Tibial artery (tissue), 4 donors: ENCODE measurements at regions of chr9 and their contacts with region 1.

Region 1: DNA sequence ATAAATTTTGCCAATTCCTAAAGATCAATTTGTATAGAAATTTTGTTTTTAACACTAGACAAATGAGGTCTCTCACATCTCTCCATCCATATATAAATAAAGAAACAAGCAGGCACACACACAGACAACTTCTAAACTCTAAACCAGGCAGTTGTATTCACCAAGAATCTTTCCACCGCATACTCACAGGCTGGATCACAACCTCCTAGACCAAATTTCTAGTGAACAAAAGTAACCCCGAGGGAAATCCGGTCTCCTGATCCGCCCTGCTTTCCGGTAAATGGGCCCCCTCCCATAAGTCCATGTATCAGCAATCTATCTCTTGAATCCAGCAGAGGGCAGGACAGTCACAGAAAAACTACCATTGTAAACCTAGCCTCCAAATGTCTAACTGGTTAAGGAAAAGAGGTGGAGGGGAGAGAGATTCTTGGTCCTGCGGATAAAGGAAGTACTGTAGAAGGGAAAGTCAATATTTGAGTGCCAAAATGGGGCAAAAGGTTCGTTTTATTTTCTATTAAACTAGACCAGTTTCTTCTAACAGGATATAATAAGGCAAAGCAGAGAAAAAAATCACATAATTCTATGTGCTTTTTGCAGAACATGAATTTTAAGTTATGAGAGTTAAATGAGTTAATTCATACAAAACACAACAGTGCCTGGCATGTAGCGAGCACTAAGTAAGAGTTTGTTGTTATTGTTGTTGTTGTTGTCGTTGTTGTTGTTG is 4.8 kb upstream of the SMU1 start:
- DNase-seq: peak in 1 of 2 donors; percentile 69
- H3K4me3 ChIP-seq: no peak overlapping the region
- H3K27ac ChIP-seq: peak overlapping the region; percentile 47 to 52
- H3K4me1 ChIP-seq: peaks cover 0 to 35% (median 24%) of the 10 kb centered on the region in 4 donors
- H3K27me3 ChIP-seq: no peaks in the 10 kb centered on the region
- CTCF ChIP-seq: peak; percentile 63 to 91

Region 2: DNA sequence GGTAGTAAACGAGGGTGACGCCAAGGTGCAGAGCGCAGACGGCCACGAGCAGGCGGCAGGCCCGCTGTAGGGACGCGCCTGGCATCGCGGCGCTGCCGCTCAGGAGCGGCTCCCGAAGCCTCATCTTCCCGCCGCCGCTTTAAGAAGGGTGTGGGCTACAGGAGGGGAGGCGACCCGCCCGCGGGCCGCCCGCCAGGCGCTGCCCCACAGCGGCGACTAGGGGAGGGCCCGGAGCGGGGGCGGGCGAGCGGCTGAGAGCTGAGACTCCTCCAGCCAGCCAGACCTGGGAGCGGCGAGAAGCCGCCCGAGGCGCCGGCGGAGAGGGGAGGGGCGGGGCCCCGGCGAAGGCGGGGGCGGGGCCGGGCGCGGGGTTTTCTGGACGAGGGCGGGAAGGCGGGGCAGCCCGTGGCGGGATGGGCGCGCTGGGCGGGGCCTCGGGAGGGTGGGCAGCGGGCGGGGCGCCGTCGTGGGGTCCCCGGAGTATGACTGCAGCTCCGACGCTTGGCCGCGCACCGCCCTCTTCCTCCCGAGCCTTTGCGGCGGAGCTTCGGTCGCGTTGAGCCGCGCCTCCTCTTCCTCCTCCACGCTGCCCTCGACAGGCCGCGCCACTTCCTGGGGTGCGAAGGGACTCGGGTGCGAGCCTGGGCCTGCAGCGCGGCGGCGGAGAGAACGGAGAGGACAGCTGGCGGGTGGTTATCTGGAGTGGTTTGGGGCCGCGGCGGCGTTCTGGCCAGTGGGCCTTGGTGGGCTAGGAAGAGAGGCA is 85.9 kb after region 1 on chr9 and contains the start of gene B4GALT1:
- intact Hi-C with region 1: loop called (anchors 5 kb)
- DNase-seq: peak; percentile 94 to 98
- H3K4me3 ChIP-seq: peak within 1 kb of the TSS; percentile 92
- H3K27ac ChIP-seq: peak within 1 kb of the TSS; percentile 95 to 98
- H3K4me1 ChIP-seq: peaks cover 0 to 43% (median 30%) of the 10 kb centered on the region in 4 donors
- H3K27me3 ChIP-seq: no peaks in the 10 kb centered on the region
- CTCF ChIP-seq: peak in 1 of 2 experiments; percentile 27

Region 3: DNA sequence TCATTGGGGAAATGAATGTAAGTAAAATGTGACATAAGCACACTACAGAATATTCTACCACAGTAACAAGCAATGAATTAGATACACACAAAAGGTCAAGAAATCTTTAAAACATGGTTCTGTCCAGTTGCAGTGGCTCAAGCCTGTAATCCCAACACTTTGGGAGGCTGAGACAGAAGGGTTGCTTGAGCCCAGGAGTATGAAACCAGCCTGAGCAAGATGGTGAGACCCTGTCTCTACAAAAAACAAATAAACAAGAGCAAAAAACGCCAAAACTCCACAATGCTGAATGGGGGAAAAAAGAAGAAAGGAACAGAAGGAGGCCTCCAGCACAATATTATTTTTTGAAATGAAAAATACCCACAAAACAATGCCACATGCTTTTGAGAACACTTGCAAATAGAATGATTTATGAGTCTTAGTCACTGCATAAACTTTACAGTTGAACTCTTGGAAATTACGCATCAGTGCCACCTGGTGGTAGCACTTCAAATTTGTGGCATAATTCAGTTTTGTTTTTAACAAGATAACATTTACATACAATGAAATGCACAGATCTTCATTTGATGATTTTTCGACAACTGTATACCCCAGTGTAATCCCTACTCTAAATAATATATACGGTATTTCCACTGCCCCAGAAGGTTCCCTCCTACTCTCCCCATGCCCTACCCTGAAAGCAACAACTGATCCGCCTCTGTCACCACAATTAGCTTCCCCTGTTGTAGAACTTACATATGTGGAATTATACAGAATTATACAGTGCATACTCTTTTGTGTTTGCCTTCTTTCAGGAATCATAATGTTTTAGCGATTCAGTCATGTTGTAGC is 144.2 kb after region 1 on chr9:
- intact Hi-C with region 1: loop called (anchors 2 kb)
- DNase-seq: peak; percentile 58 to 66
- H3K4me3 ChIP-seq: no peak overlapping the region
- H3K27ac ChIP-seq: peak overlapping the region; percentile 18 to 31
- H3K4me1 ChIP-seq: peaks cover 0 to 8% (median 5%) of the 10 kb centered on the region in 4 donors
- H3K27me3 ChIP-seq: no peaks in the 10 kb centered on the region
- CTCF ChIP-seq: peak; percentile 60 to 97